Panc1 (cell line): ENCODE measurements at regions of chr15 and their contacts with region 1.

Region 1: DNA sequence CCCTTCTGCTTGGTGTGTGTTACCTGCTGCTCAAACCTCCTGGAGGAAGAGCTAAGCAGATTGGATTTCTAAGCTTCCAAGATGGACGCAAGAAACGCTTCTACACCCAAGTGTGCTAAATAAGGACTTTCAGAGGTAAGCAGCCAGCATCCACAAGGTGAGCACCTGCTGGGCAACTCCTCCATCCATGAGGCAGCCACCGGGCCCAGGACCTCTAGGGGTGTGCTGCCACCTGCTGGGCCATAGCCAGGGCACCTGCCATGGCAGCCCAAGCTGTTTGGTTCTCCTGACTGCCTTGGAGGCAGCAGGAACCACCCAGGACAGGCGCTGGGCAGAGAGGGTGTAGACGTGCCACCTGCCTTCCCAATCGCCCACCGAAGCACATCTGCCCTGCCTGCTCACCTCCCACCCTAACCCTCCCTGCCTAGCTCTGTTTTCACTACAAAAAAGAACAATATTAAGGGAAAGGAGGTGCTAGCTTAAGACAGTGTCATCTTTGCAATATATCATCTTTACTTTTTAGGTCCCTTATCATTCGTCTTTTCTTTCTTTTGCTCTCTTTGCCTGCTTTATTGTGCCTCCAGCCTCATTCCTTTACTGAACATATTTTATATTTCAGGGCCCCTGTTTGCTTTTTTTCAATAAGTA is 12.9 kb downstream of the C15orf62 start:
- DNase-seq: peak; percentile 35
- ATAC-seq: peak; percentile 99
- H3K4me3 ChIP-seq: no peak overlapping the region
- H3K27ac ChIP-seq: no peak overlapping the region
- H3K4me1 ChIP-seq: peaks cover 5% of the 10 kb centered on the region; the same call in 1 of the 2 replicates
- H3K27me3 ChIP-seq: no peaks in the 10 kb centered on the region
- CTCF ChIP-seq: peak; percentile 87; the same call in 1 of the 2 replicates

Region 2: GRCh38 chr15:40633143-40633542 is 149.6 kb before region 1 on chr15:
- CTCF ChIA-PET with region 1: no interaction called
- POLR2A ChIA-PET with region 1: no interaction called
- in situ Hi-C with region 1: loop called (anchors 25 kb)
- intact Hi-C with region 1: no loop called
- DNase-seq: no peak
- ATAC-seq: peak; percentile 75
- H3K4me3 ChIP-seq: no peak overlapping the region
- H3K27ac ChIP-seq: no peak overlapping the region
- H3K4me1 ChIP-seq: peaks cover 3% of the 10 kb centered on the region; the same call in 1 of the 2 replicates
- H3K27me3 ChIP-seq: no peaks in the 10 kb centered on the region
- CTCF ChIP-seq: no peak

Region 3: GRCh38 chr15:40684381-40684780 is 98.3 kb before region 1 on chr15:
- CTCF ChIA-PET with region 1: interaction called, 4 read pairs
- POLR2A ChIA-PET with region 1: no interaction called
- in situ Hi-C with region 1: no loop called
- intact Hi-C with region 1: loop called (anchors 10 kb)
- DNase-seq: no peak
- ATAC-seq: no peak
- H3K4me3 ChIP-seq: no peak overlapping the region
- H3K27ac ChIP-seq: no peak overlapping the region
- H3K4me1 ChIP-seq: no peaks in the 10 kb centered on the region
- H3K27me3 ChIP-seq: no peaks in the 10 kb centered on the region
- CTCF ChIP-seq: no peak

Region 4: DNA sequence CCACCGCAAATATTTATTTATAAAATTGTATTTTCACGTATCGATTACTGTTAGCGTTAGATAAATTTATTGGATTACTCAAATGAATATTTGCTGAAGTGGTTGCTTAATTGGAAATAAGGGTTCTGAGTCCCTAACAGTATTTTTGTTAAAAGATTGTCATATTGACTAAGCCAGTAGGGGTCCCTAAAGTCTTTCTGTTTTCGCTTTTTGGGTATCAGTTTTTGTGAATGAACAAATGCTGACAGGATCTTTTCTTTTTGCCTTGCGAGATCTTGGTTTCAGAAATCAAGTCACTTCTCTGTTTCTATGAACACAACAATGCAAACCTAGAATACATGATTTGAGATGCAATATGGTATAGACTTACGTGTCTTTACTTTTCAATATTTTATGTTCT is 80.6 kb before region 1 on chr15:
- CTCF ChIA-PET with region 1: no interaction called
- POLR2A ChIA-PET with region 1: no interaction called
- in situ Hi-C with region 1: no loop called
- intact Hi-C with region 1: no loop called
- DNase-seq: no peak
- ATAC-seq: no peak
- H3K4me3 ChIP-seq: no peak overlapping the region
- H3K27ac ChIP-seq: no peak overlapping the region
- H3K4me1 ChIP-seq: no peaks in the 10 kb centered on the region
- H3K27me3 ChIP-seq: no peaks in the 10 kb centered on the region
- CTCF ChIP-seq: no peak

Region 5: GRCh38 chr15:40825661-40826088 is 43.0 kb after region 1 on chr15:
- CTCF ChIA-PET with region 1: interaction called, 10 read pairs
- POLR2A ChIA-PET with region 1: no interaction called
- in situ Hi-C with region 1: no loop called
- intact Hi-C with region 1: no loop called
- DNase-seq: no peak
- ATAC-seq: peak; percentile 72
- H3K4me3 ChIP-seq: no peak overlapping the region
- H3K27ac ChIP-seq: peak overlapping the region; percentile 53
- H3K4me1 ChIP-seq: peaks cover 29% of the 10 kb centered on the region
- H3K27me3 ChIP-seq: no peaks in the 10 kb centered on the region
- CTCF ChIP-seq: no peak